ENCODE measurements at regions of chr1 and their contacts with region 1.

Region 1: DNA sequence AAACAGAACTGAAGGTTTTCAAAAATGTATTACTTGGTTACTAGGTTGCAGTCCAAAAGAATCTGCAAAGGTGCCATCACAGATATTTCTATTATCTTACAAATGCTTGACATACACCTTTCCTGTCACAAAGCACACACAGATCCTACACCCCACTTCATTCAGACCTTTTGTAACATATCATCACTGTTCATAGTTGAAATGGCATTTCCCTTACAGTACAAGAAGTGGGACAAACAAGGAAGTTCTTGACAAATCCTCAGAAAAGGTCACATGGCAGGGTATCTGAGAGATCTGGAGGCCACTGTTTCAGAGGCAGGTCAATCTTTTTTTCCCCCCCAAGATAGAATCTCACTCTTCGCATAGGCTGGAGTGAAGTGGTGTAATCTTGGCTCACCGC is 21.3 kb downstream of the TOR1AIP2 start:
- DNase-seq: no peak
- H3K4me3 ChIP-seq: no peak overlapping the region
- H3K27ac ChIP-seq: no peak overlapping the region
- H3K27me3 ChIP-seq: no peaks in the 10 kb centered on the region
- CTCF ChIP-seq: no peak

Region 2: GRCh38 chr1:179867807-179868330 is 11.6 kb after region 1 on chr1:
- CTCF ChIA-PET with region 1: interaction called, 14 read pairs
- POLR2A ChIA-PET with region 1: no interaction called
- DNase-seq: no peak
- H3K4me3 ChIP-seq: no peak overlapping the region
- H3K27ac ChIP-seq: no peak overlapping the region
- H3K27me3 ChIP-seq: no peaks in the 10 kb centered on the region
- CTCF ChIP-seq: peak; percentile 84